ENCODE measurements at regions of chr15 and their contacts with region 1.

Region 1: DNA sequence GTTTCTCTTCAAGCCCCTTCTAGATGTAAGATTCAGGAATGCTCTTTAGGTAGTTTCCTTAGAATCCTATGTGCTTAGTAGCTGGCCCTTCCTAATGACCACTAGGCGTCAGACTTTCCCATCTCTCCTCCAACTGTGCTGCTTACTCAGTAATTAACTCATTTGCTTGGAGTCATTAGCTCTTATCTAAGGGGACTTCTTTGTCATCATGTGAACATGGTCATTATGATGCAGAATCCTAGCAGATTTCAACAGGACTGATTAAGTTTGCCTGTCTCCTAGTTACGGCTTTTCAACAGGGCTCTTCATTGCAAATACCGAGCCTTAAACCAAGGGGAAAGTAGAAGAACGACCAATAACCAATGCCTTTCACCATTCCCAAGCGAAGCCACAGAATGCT is 46.4 kb downstream of the GJD2 start:
- DNase-seq: peak; percentile 19
- ATAC-seq: peak; percentile 92
- H3K4me3 ChIP-seq: no peak overlapping the region
- H3K27ac ChIP-seq: no peak overlapping the region
- H3K4me1 ChIP-seq: no peaks in the 10 kb centered on the region
- H3K27me3 ChIP-seq: peaks cover 76% of the 10 kb centered on the region
- CTCF ChIP-seq: peak; percentile 20 to 89 (median 88); a peak in 5 of 6 replicates
- POLR2A ChIP-seq: no peak
- RAD21 ChIP-seq: peak; percentile 68

Region 2: DNA sequence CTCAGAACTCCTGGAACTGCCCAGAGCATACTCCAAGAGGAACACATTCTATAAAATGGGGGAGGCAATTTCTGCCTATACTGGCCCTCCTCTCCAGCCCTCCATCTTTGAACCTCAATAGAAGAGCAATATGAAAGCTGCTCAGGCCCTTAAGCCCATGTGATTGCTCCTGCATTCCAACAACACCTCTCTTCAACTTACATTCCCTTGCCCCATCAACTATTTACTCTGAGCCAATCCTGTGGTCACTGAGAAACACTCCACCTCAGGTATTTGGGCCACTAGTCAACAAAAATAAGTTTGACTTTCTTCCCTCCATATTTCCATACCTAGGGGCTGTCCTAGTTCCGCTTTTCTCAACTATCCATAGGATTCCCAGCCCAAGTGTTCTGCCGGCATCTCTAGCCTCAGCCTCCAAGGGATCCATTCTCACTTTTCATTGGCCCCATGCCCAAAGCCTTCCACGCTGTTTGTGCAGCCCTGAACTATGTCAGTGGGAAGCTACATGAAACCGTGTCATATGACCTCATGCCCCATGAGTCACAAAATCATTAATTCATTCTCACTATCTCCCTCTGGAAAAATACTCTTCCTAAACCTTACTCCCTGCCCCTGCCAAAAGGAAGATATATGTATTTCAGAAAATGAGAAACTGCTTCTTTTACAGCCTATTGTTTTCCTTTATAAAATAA is 15.2 kb before region 1 on chr15:
- CTCF ChIA-PET with region 1: interaction called, 11 read pairs
- POLR2A ChIA-PET with region 1: no interaction called
- RAD21 ChIA-PET with region 1: no interaction called
- intact Hi-C with region 1: no loop called
- DNase-seq: no peak
- ATAC-seq: no peak
- H3K4me3 ChIP-seq: no peak overlapping the region
- H3K27ac ChIP-seq: no peak overlapping the region
- H3K4me1 ChIP-seq: peaks cover 4 to 8% of the 10 kb centered on the region in 2 experiments; a peak in 2 of 4 replicates
- H3K27me3 ChIP-seq: no peaks in the 10 kb centered on the region
- CTCF ChIP-seq: no peak
- POLR2A ChIP-seq: no peak
- RAD21 ChIP-seq: no peak

Region 3: DNA sequence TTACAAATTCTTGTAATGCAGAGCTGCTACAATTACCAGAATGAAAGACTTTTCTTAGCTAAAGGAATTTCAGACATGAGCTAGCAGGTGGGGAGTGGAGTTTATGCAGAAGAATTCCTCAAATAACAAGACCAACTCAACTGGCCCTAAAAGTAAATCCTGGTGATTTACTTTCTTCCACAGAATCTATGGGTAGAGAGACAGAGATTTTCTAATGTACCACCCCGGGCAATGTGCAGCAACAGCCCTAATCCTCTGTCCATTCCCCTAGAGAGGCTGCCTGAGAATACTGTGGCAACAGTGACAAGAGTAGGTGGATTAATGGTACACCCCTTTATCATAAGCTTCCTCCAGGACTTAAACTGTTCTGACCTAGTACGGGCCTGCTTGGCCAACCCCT is 205.9 kb after region 1 on chr15:
- CTCF ChIA-PET with region 1: interaction called, 28 read pairs
- POLR2A ChIA-PET with region 1: no interaction called
- RAD21 ChIA-PET with region 1: no interaction called
- intact Hi-C with region 1: no loop called
- DNase-seq: no peak
- ATAC-seq: no peak
- H3K4me3 ChIP-seq: no peak overlapping the region
- H3K27ac ChIP-seq: no peak overlapping the region
- H3K4me1 ChIP-seq: no peaks in the 10 kb centered on the region
- H3K27me3 ChIP-seq: no peaks in the 10 kb centered on the region
- CTCF ChIP-seq: no peak
- POLR2A ChIP-seq: no peak
- RAD21 ChIP-seq: no peak

Region 4: DNA sequence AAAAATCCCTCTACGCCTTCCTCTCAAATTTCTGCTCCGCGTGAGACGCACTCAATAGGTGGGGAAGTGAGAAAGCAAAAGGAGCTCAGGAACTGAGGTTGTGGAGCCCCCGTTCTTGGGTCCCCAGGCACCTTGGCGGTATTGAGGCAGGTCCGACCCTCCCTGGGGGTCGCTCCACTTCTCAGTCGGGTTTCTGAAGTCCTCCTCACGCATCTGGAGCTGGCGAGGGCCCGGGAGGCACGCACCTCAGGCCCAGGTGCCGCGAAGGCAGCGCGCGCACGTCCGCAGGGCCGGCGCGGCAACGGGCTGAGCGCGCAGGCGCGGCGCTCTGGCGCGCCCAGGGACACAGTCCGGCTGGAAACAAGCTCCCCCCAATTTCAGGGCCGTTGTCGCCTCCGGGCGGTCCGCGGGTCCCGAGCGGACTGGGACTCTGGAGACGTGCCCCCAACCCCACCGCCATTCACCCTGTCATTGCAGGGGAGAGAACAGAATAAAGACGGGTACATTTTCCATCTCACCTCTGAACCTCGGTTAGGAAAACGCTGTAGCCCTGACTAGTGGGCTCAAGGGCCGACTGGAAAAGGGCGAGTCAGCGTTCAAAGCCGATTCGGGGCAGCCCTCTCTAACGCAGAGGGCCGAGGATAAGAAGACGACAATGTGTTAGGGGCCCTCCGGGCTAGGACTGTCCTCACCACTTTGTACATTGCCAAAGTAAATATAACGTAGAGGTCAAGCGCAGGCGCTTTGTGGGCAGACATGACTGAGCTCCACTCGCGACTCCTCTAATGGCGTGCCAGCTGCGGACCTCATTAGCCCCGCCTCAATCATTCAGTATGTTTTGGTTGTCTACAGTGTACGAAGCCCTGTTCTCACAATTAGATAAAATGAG is 279.8 kb after region 1 on chr15 and contains the start of gene ZNF770:
- CTCF ChIA-PET with region 1: no interaction called
- POLR2A ChIA-PET with region 1: no interaction called
- RAD21 ChIA-PET with region 1: no interaction called
- intact Hi-C with region 1: no loop called
- DNase-seq: peak; percentile 51
- ATAC-seq: peak; percentile 88
- H3K4me3 ChIP-seq: peak within 1 kb of the TSS; percentile 72 to 99
- H3K27ac ChIP-seq: peak within 1 kb of the TSS; percentile 90
- H3K4me1 ChIP-seq: peaks cover 25 to 47% of the 10 kb centered on the region in 2 experiments
- H3K27me3 ChIP-seq: no peaks in the 10 kb centered on the region
- CTCF ChIP-seq: no peak
- POLR2A ChIP-seq: peak; percentile 80
- RAD21 ChIP-seq: no peak
- total RNA-seq, gene ZNF770: 70.7 TPM

Measured in HCT116 (cell line).